ENCODE measurements at regions of chr12 and their contacts with region 1.

Region 1: GRCh38 chr12:85468356-85469157 is 188.5 kb downstream of the ALX1 start:
- DNase-seq: peak; percentile 19
- ATAC-seq: peak; percentile 41 to 55

Region 2: GRCh38 chr12:85155787-85156186 is 312.8 kb before region 1 on chr12:
- intact Hi-C with region 1: no loop called
- DNase-seq: no peak
- ATAC-seq: no peak

Region 3: GRCh38 chr12:85693093-85693665 is 224.6 kb after region 1 on chr12:
- intact Hi-C with region 1: no loop called
- DNase-seq: no peak
- ATAC-seq: no peak

Region 4: GRCh38 chr12:85872497-85873091 is 404.0 kb after region 1 on chr12:
- intact Hi-C with region 1: loop called in 1 of 2 experiments (anchors 5 kb)
- DNase-seq: no peak
- ATAC-seq: no peak

Region 5: GRCh38 chr12:85920324-85920947 is 451.9 kb after region 1 on chr12:
- intact Hi-C with region 1: loop called (anchors 5 to 10 kb)
- DNase-seq: no peak
- ATAC-seq: no peak